Activated naive CD4-positive, alpha-beta T cell treated with anti-CD3 and anti-CD28 coated beads for 36 hours (primary cell): ENCODE measurements at regions of chr2 and their contacts with region 1.

Region 1: GRCh38 chr2:86480105-86480504 is 38.9 kb downstream of the KDM3A start:
- DNase-seq: no peak
- H3K4me3 Mint-ChIP-seq: no peak overlapping the region
- H3K27ac Mint-ChIP-seq: no peak overlapping the region
- H3K4me1 Mint-ChIP-seq: peaks cover 50% of the 10 kb centered on the region
- H3K27me3 Mint-ChIP-seq: no peaks in the 10 kb centered on the region

Region 2: GRCh38 chr2:86396291-86396785 is 83.8 kb before region 1 on chr2:
- CTCF ChIA-PET with region 1: interaction called, 5 read pairs
- intact Hi-C with region 1: loop called (anchors 2 kb)
- DNase-seq: peak; percentile 57
- H3K4me3 Mint-ChIP-seq: no peak overlapping the region
- H3K27ac Mint-ChIP-seq: peak overlapping the region; percentile 15
- H3K4me1 Mint-ChIP-seq: peaks cover 17% of the 10 kb centered on the region
- H3K27me3 Mint-ChIP-seq: no peaks in the 10 kb centered on the region